Activated naive CD4-positive, alpha-beta T cell treated with anti-CD3 and anti-CD28 coated beads for 36 hours (primary cell): ENCODE measurements at regions of chr20 and their contacts with region 1.

Region 1: DNA sequence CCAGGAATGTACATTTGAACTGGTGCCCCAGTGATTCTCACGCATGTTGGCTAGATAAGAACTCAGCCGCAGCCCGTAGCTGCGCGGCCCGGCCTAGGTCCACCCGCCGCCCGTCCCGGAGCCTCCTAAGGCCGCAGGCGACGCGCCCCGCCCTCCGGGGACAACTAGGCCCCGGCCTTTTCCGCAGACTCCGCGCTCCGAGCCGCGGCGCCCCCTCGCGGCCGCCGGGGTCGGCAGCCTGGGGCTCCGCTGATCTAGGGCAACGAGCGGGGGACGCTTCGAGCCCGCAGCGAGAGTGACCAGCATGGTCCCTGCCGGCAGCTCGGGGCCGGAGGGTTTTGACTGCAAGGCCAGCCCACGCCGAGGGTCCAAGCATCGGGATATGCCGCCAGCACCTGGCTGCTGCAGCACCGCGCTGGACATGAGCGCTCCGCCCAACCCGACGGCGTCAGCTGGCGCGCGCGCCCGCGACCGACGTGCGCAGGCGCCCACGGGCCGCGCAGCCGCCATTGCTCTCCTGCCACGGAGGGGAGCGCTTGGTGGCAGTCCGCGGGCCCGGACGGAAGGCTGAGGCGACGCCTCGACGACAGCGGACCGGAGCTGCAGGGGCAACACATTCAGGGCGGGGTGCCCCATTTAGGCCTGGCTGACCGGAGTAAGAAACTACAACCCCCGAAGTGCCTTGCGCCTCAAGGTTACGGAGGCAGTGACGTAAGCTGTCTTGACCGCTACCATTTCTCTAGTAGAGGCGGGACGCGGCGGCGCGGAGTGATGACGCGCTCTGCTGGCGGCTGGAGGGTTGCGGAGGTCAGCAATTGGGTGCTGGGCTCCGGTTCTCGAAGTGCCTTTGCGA is at the start of gene AP5S1:
- DNase-seq: peak; percentile 96
- H3K4me3 Mint-ChIP-seq: peak within 1 kb of the TSS; percentile 85
- H3K27ac Mint-ChIP-seq: peak within 1 kb of the TSS; percentile 94
- H3K4me1 Mint-ChIP-seq: peaks cover 36% of the 10 kb centered on the region
- H3K27me3 Mint-ChIP-seq: no peaks in the 10 kb centered on the region
- total RNA-seq, gene AP5S1: 8.0 to 8.2 TPM

Region 2: DNA sequence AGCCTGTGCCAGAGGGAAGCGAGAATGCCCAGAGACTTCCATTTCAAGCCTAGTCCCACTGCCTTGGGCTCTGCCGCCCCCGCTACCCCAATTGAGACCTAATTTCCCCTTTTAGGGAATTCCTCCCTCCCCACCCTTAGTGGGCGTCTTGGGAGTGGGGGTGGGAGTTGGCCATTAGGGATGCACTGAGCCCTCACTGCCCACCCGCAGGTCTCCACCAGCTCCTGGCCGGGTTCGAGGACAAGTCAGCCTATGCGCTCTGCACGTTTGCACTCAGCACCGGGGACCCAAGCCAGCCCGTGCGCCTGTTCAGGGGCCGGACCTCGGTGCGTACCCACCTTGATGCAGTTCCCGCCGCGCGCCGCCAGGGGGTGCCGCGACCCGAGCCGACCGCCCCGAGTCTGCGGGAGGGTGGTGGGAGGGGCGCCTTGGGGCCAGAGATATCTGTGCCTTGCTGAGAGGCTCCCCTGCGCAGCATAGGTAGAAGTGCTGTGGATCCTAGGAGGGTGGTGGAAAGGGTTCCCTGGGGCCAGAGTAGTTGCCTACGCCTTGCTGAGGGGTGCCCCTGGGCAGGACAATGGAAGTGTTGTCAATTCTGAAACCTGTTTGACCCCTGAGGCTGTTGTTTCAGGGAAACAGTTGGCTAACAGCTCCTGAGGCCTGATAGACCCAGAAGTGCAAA is 601.8 kb before region 1 on chr20:
- CTCF ChIA-PET with region 1: no interaction called
- intact Hi-C with region 1: no loop called
- DNase-seq: peak; percentile 76
- H3K4me3 Mint-ChIP-seq: no peak overlapping the region
- H3K27ac Mint-ChIP-seq: no peak overlapping the region
- H3K4me1 Mint-ChIP-seq: peaks cover 21% of the 10 kb centered on the region
- H3K27me3 Mint-ChIP-seq: no peaks in the 10 kb centered on the region

Region 3: GRCh38 chr20:3753098-3753980 is 66.9 kb before region 1 on chr20:
- CTCF ChIA-PET with region 1: interaction called, 6 read pairs
- intact Hi-C with region 1: loop called (anchors 1 kb)
- DNase-seq: peak; percentile 81
- H3K4me3 Mint-ChIP-seq: no peak overlapping the region
- H3K27ac Mint-ChIP-seq: no peak overlapping the region
- H3K4me1 Mint-ChIP-seq: peaks cover 7% of the 10 kb centered on the region
- H3K27me3 Mint-ChIP-seq: no peaks in the 10 kb centered on the region

Region 4: DNA sequence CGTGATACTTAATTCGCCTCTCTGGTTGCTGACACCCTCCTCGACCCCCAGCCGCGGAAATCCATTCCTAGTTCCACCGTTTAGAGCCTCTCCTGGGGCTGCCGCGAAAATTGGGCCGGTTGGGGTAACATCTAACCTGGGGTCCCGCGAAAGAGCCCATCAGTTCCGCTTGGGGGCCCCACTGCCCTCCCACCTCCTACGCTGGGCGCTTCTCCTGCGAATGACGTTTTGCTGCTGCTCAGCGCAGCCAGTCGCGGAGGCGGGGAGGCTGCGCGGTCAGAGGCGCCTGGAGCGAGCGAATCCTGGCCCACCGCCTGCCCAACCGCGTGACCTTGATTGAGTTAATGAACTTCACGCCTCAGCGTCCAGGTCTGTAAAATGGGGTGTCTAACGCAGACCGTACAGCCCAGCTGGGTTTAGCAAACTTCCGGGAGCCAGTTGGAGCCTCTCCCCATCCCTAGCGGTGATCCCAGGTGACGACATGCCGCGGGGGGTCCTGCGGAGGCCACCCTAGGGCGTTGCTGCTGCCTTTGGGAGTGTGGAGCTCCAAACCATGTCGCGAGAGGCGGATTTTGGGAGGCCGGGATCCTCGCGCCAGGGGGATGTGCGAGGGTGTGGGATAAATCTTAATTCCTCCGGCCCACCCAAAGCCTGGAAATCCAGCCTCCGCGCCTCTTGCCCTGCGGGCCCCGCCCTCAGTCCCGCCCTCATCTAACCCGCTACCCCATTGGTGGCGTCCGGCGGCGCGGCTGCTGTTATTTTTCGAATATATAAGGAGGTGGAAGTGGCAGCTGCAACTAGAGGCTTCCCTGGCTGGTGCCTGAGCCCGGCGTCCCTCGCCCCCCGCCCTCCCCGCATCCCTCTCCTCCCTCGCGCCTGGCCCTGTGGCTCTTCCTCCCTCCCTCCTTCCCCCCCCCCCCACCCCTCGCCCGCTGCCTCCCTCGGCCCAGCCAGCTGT is 24.5 kb before region 1 on chr20 and contains the start of gene CDC25B:
- CTCF ChIA-PET with region 1: interaction called, 12 read pairs
- intact Hi-C with region 1: loop called (anchors 1 kb)
- DNase-seq: peak; percentile 95
- H3K4me3 Mint-ChIP-seq: peak within 1 kb of the TSS; percentile 94
- H3K27ac Mint-ChIP-seq: peak within 1 kb of the TSS; percentile 97
- H3K4me1 Mint-ChIP-seq: peaks cover 49% of the 10 kb centered on the region
- H3K27me3 Mint-ChIP-seq: no peaks in the 10 kb centered on the region
- total RNA-seq, gene CDC25B: 94.8 to 97.7 TPM

Region 5: DNA sequence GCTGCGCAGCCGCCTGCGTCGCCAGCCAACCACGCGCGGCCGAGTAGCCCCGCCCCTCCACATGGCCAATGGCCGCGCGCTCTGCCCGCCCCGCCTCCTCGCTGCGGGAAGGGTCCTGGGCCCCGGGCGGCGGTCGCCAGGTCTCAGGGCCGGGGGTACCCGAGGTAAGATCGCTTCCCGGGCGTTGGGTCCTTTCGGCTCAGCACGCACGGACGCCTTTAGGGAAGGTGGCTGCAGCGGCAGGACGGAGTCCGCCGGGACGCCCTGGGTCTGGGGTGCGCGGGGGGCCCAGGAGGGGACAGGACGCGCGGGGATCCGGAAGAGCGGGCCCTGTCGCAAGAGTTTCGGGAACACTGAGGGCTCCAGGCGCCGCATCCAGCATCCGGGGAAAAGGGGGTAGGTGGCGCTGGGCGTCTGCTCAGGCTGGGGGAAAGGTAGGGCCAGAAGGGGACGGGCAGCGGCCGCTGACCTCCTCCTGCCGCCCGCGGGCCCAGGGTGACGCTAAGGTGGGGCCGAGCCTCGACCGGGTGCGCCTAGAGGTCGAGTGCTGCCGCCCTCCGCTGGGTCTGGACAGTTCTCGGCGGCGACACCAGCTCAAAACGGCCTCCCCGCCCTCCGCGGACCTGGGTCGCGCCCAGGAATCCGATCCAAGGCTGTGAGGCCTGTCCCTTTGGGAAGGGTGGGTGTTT is 26.6 kb after region 1 on chr20 and contains the start of gene MAVS:
- CTCF ChIA-PET with region 1: interaction called, 3 read pairs
- intact Hi-C with region 1: loop called (anchors 1 kb)
- DNase-seq: peak; percentile 84
- H3K4me3 Mint-ChIP-seq: peak within 1 kb of the TSS; percentile 85
- H3K27ac Mint-ChIP-seq: peak within 1 kb of the TSS; percentile 83
- H3K4me1 Mint-ChIP-seq: peaks cover 29% of the 10 kb centered on the region
- H3K27me3 Mint-ChIP-seq: no peaks in the 10 kb centered on the region
- total RNA-seq, gene MAVS: 14.8 to 16.0 TPM